ENCODE measurements at regions of chr3 and their contacts with region 1.

Region 1: DNA sequence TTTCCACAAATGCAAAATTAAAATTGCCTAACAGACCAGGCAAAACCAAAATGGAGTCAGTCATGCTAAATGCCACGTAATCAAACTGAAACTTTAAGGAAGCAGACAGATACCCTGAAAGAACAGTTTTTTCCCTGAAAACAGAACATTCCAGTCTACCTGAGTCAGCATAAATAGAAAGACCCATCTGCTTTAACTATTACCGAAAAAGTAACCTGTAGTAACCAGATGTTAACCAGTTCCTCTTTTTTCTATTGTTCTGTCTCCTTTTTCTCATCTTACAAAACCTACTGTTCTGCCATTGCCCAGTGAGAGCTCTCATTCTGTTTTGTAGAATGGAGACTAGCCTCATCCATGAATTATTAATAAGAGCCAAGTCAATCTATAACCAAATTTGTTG is 286.0 kb downstream of the CACNA2D3 start:
- DNase-seq: no peak
- H3K4me3 ChIP-seq: no peak overlapping the region
- H3K27ac ChIP-seq: no peak overlapping the region
- H3K4me1 ChIP-seq: no peaks in the 10 kb centered on the region
- H3K27me3 ChIP-seq: no peaks in the 10 kb centered on the region
- CTCF ChIP-seq: no peak
- POLR2A ChIP-seq: no peak

Region 2: DNA sequence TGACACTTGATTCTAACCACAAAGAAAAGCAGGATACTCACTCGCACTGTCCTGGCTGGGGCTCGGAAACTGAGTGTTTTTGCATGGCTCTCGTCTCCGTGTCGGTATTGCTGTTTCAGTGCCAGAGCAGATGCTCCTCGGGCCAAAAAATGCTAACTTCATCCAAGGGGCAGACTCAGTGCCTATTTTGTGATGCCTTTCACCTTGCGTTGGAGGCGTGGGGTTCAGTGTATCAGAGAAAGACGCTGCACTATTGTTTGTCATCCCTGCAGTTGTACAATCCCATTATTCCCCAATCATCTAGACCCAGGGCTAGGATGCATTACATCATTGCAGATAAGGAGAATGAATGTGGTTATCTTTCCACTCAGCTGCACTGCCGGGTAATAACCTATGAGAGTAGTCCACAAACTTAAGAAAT is 284.5 kb before region 1 on chr3:
- CTCF ChIA-PET with region 1: no interaction called
- POLR2A ChIA-PET with region 1: no interaction called
- dilution Hi-C with region 1: no loop called
- intact Hi-C with region 1: no loop called
- DNase-seq: no peak
- H3K4me3 ChIP-seq: no peak overlapping the region
- H3K27ac ChIP-seq: no peak overlapping the region
- H3K4me1 ChIP-seq: no peaks in the 10 kb centered on the region
- H3K27me3 ChIP-seq: peaks cover 29 to 37% of the 10 kb centered on the region in 2 experiments
- CTCF ChIP-seq: no peak
- POLR2A ChIP-seq: no peak

Region 3: GRCh38 chr3:54360320-54360719 is 48.0 kb before region 1 on chr3:
- CTCF ChIA-PET with region 1: no interaction called
- POLR2A ChIA-PET with region 1: no interaction called
- dilution Hi-C with region 1: no loop called
- intact Hi-C with region 1: loop called (anchors 2 kb)
- DNase-seq: no peak
- H3K4me3 ChIP-seq: no peak overlapping the region
- H3K27ac ChIP-seq: no peak overlapping the region
- H3K4me1 ChIP-seq: no peaks in the 10 kb centered on the region
- H3K27me3 ChIP-seq: no peaks in the 10 kb centered on the region
- CTCF ChIP-seq: no peak
- POLR2A ChIP-seq: no peak

Region 4: GRCh38 chr3:54494209-54494608 is 85.9 kb after region 1 on chr3:
- CTCF ChIA-PET with region 1: no interaction called
- POLR2A ChIA-PET with region 1: no interaction called
- dilution Hi-C with region 1: no loop called
- intact Hi-C with region 1: no loop called
- DNase-seq: no peak
- H3K4me3 ChIP-seq: no peak overlapping the region
- H3K27ac ChIP-seq: no peak overlapping the region
- H3K4me1 ChIP-seq: no peaks in the 10 kb centered on the region
- H3K27me3 ChIP-seq: no peaks in the 10 kb centered on the region
- CTCF ChIP-seq: no peak
- POLR2A ChIP-seq: no peak

Measured in endothelial cell of umbilical vein (primary cell).